Activated T-helper 2 cell treated with anti-CD3 and anti-CD28 coated beads, Interferon-gamma antibody, Interleukin-2, Interleukin-4, amounts not matched to agents 10 μg/mL and 5 μg/mL and 100 μg/mL, durations not matched to agents 14 hours and 24 hours and 36 hours (primary cell): ENCODE measurements at regions of chr4 and their contacts with region 1.

Region 1: DNA sequence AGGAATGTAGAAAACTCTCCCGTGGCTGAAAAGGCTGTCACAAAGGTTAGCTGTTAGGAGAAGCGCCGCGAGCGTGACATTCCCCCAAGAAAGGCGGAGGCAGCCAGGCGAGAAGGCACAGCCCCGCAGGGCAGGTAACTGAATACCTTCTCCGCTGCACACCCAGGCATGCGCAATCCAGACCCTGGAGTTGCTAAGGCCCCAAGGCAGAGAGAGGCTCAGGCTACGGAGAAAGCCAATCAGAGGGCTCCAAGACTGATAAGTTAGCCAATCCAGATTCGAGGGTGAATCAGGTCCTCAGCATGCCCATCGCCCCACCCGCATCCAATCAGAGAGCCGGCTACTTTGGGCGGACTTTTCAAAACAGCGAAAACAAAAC is 485 bp upstream of the CCNG2 start:
- DNase-seq: peak; percentile 97
- H3K4me3 Mint-ChIP-seq: peak overlapping the region; percentile 96
- H3K27ac Mint-ChIP-seq: peak overlapping the region; percentile 97
- H3K4me1 Mint-ChIP-seq: peaks cover 49% of the 10 kb centered on the region
- H3K27me3 Mint-ChIP-seq: no peaks in the 10 kb centered on the region

Region 2: GRCh38 chr4:77095101-77095821 is 61.3 kb before region 1 on chr4:
- intact Hi-C with region 1: loop called (anchors 5 kb)
- DNase-seq: peak; percentile 55
- H3K4me3 Mint-ChIP-seq: no peak overlapping the region
- H3K27ac Mint-ChIP-seq: no peak overlapping the region
- H3K4me1 Mint-ChIP-seq: peaks cover 25% of the 10 kb centered on the region
- H3K27me3 Mint-ChIP-seq: peaks cover 6% of the 10 kb centered on the region

Region 3: DNA sequence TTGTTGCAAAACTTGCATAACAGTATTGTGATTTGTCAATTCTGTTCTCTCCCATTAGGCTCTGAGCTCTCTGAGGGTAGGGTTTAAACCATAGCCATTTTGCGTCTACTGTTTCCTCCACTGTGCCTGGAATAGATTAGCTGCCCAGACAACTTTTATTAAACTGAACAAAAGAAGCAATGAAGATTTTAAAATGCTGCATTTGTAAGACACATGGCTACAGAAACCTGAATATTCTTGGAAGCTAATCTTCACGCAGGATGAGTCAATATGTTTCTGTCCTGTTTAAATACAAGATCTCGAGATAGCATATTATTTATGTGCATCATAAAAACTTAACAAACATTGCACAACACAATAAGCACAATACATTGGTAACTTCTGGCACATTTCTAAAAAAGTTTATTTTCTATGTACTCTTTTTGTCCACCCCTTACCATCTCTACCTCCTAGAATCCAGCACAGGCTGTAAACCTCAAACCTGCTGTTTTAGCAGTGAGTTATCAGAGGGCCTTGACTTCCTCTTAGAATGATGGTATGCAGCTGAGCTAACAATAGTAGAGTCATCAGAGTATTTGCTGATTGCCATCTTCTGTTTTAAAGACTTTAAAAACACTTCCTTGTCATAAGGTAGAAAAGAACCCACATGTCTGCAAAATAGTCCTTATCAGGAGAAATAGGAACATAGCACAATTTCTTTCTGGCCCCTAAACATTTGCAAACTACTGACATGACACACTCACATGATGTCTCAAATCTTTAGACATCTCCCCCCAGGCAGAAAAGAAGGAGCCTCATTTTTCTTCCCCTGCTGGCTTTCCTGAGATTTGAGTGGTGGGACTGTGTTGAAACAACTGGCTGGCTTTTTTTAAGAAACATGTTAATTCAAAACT is 10.1 kb before region 1 on chr4:
- intact Hi-C with region 1: loop called (anchors 1 kb)
- DNase-seq: no peak
- H3K4me3 Mint-ChIP-seq: peak overlapping the region; percentile 43
- H3K27ac Mint-ChIP-seq: peak overlapping the region; percentile 87
- H3K4me1 Mint-ChIP-seq: peaks cover 22% of the 10 kb centered on the region
- H3K27me3 Mint-ChIP-seq: no peaks in the 10 kb centered on the region

Region 4: DNA sequence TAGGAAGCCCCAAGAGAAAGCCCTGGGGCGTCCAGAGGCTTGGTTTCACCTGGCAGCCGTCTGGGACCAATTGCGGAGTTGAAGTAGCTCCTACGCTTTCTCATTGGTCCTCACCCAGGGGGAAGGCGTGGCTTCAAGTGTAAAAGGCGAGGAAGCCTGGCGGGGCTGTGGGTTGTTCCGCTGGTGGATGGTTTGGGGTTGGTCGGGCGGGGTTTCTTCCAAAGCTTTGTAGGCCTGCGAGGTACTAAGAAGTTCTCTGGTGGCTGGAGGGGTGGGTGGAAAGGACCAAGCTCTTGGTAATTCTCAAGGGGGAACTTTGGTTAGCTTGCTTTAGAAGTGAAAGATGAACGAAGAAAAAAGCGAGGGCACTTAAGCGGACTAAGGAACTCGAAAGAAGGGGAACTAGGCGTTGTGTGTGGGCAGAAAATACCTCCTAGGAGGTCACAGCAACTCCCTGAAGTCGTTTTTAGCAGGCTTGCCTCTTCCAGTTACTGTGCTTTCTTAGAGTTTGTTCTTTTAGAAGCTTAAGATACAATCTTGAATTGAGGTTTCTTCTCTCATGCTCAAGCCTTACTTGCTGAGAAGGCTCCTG is 37.1 kb after region 1 on chr4:
- intact Hi-C with region 1: loop called (anchors 1 kb)
- DNase-seq: peak; percentile 77
- H3K4me3 Mint-ChIP-seq: peak overlapping the region; percentile 81
- H3K27ac Mint-ChIP-seq: peak overlapping the region; percentile 97
- H3K4me1 Mint-ChIP-seq: peaks cover 47% of the 10 kb centered on the region
- H3K27me3 Mint-ChIP-seq: peaks cover 3% of the 10 kb centered on the region

Region 5: GRCh38 chr4:77493120-77493752 is 336.7 kb after region 1 on chr4:
- intact Hi-C with region 1: no loop called
- DNase-seq: no peak
- H3K4me3 Mint-ChIP-seq: no peak overlapping the region
- H3K27ac Mint-ChIP-seq: no peak overlapping the region
- H3K4me1 Mint-ChIP-seq: no peaks in the 10 kb centered on the region
- H3K27me3 Mint-ChIP-seq: peaks cover 11% of the 10 kb centered on the region

Region 6: GRCh38 chr4:77852892-77853495 is 696.5 kb after region 1 on chr4:
- intact Hi-C with region 1: loop called (anchors 10 kb)
- DNase-seq: peak; percentile 70
- H3K4me3 Mint-ChIP-seq: peak overlapping the region; percentile 72
- H3K27ac Mint-ChIP-seq: peak overlapping the region; percentile 93
- H3K4me1 Mint-ChIP-seq: peaks cover 52% of the 10 kb centered on the region
- H3K27me3 Mint-ChIP-seq: no peaks in the 10 kb centered on the region